ENCODE measurements at regions of chr17 and their contacts with region 1.

Region 1: GRCh38 chr17:50865984-50866774 is at the start of gene TOB1:
- DNase-seq: peak; percentile 53
- ATAC-seq: peak; percentile 90
- H3K4me3 ChIP-seq: peak within 1 kb of the TSS; percentile 95 to 96
- H3K27ac ChIP-seq: peak within 1 kb of the TSS; percentile 99
- H3K4me1 ChIP-seq: peaks cover 33% of the 10 kb centered on the region
- H3K27me3 ChIP-seq: no peaks in the 10 kb centered on the region
- CTCF ChIP-seq: no peak
- total RNA-seq, gene TOB1: 117 TPM

Region 2: DNA sequence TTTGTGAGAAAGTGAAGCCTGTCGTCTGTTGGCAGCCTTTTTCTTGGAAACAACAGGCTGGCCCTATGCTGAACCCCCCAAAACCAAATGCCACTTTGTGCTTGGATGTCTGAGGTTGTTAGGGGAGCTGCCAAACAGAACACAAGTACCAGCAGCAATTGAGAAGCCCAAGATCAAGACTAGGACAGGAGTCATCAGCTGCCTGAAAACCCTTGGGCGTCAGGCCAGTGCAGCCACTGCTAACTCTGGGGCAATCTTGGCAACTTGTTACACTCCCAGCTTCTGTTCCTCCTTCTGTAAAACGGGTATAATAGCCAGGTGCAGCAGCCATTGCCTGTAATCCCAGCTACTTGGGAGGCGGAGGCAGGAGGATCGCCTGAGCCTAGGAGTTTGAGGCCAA is 459.6 kb before region 1 on chr17:
- CTCF ChIA-PET with region 1: no interaction called
- POLR2A ChIA-PET with region 1: interaction called, 18 read pairs
- in situ Hi-C with region 1: no loop called
- intact Hi-C with region 1: no loop called
- DNase-seq: no peak
- ATAC-seq: peak; percentile 48; the same call in 1 of the 2 replicates
- H3K4me3 ChIP-seq: no peak overlapping the region
- H3K27ac ChIP-seq: no peak overlapping the region
- H3K4me1 ChIP-seq: no peaks in the 10 kb centered on the region
- H3K27me3 ChIP-seq: no peaks in the 10 kb centered on the region
- CTCF ChIP-seq: no peak

Region 3: GRCh38 chr17:50853015-50853615 is 13.1 kb before region 1 on chr17:
- CTCF ChIA-PET with region 1: interaction called, 10 read pairs
- POLR2A ChIA-PET with region 1: interaction called, 9 read pairs
- in situ Hi-C with region 1: no loop called
- intact Hi-C with region 1: no loop called
- DNase-seq: no peak
- ATAC-seq: no peak
- H3K4me3 ChIP-seq: no peak overlapping the region
- H3K27ac ChIP-seq: no peak overlapping the region; the same call in 1 of the 2 replicates
- H3K4me1 ChIP-seq: peaks cover 11% of the 10 kb centered on the region; the same call in 1 of the 2 replicates
- H3K27me3 ChIP-seq: no peaks in the 10 kb centered on the region
- CTCF ChIP-seq: no peak

Region 4: DNA sequence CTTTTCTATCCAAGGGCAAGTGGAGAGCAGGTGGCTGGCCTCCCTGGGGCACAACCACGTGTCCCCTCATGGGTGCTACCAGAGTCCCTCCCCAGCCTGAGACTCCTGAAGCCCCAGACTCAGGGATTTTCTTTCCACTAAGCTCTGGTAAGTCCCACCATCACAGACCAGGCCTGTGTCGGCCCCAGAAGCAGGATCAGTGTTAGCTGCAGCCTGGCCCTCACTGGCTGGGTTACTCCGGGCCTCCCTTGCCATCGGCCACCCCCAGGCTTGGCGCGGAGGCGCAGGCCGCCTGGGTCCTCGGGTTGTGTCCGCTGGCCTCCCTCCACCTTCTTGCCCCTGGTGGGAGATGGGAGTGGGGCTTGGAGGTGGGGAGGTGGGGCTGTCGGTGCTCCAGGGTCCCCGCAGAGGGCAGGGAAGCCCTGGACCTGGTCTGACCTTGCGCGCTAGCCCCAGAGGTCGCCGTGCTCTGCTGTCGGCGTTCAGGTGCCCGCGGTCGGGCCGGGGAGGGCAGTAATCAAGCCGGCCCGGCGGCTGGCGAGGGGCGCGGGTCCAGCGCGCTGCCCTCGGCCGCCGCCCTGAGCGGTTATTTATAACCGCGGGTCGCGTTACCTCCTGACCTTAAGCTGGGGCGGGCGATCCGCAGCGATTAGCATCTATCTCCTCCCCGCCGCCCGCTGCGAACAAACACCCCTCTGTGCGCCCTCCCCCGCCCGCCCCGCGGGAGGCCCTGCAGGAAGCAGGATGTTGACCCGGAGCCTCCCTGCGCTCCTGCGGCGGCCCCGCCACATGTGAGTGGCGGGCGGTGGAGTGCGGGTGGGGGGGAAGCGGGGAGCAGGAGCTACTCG is 78.1 kb after region 1 on chr17:
- CTCF ChIA-PET with region 1: interaction called, 11 read pairs
- POLR2A ChIA-PET with region 1: interaction called, 30 read pairs
- in situ Hi-C with region 1: no loop called
- intact Hi-C with region 1: no loop called
- DNase-seq: no peak
- ATAC-seq: peak; percentile 81
- H3K4me3 ChIP-seq: peak overlapping the region; percentile 31 to 42
- H3K27ac ChIP-seq: peak overlapping the region; percentile 87
- H3K4me1 ChIP-seq: peaks cover 49% of the 10 kb centered on the region
- H3K27me3 ChIP-seq: no peaks in the 10 kb centered on the region
- CTCF ChIP-seq: no peak

Region 5: DNA sequence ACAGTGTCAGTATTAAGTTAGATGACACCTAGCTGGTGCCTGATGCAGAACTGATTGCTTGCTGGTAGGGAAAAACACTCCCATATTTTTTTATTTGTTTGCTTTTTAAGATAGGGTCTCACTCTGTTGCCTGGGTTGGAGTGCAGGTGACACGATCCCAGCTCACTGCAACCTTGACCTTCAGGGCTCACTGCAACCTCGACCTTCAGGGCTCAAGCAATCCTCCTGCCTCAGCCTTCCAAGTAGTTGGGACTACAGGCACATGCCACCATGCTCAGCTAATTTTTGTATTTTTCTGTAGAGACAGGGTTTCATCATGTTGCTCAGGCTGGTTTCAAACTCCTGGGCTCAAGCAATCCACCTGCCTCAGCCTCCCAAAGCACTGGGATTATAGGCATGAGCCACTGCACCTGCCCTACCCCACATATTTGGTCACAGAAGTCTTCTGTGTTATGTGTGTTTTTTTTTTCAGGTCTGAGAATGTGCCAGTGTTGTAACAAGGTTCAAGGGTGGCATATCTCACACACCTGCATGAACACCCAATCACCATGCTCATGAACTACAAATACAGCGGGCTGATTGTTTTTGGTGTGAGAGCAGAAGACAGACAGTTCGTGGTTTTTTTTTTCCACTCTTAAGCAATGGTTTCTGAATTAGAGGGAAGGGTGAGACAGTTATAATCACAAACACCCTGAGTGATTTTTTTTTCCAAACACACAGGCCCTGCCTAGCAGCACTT is 231.7 kb after region 1 on chr17:
- CTCF ChIA-PET with region 1: no interaction called
- POLR2A ChIA-PET with region 1: interaction called, 10 read pairs
- in situ Hi-C with region 1: no loop called
- intact Hi-C with region 1: no loop called
- DNase-seq: no peak
- ATAC-seq: no peak
- H3K4me3 ChIP-seq: no peak overlapping the region
- H3K27ac ChIP-seq: no peak overlapping the region
- H3K4me1 ChIP-seq: no peaks in the 10 kb centered on the region
- H3K27me3 ChIP-seq: no peaks in the 10 kb centered on the region
- CTCF ChIP-seq: no peak

Region 6: GRCh38 chr17:51154176-51154575 is 288.0 kb after region 1 on chr17:
- CTCF ChIA-PET with region 1: no interaction called
- POLR2A ChIA-PET with region 1: no interaction called
- in situ Hi-C with region 1: no loop called
- intact Hi-C with region 1: no loop called
- DNase-seq: no peak
- ATAC-seq: no peak
- H3K4me3 ChIP-seq: peak overlapping the region; percentile 91 to 99
- H3K27ac ChIP-seq: peak overlapping the region; percentile 97
- H3K4me1 ChIP-seq: peaks cover 11% of the 10 kb centered on the region; the same call in 1 of the 2 replicates
- H3K27me3 ChIP-seq: no peaks in the 10 kb centered on the region
- CTCF ChIP-seq: no peak

Measured in Panc1 (cell line).